ENCODE measurements at regions of chr12 and their contacts with region 1.

Region 1: GRCh38 chr12:9813821-9814809 is 13.2 kb upstream of the KLRF1 start:
- DNase-seq: peak; percentile 96
- ATAC-seq: peak; percentile 97
- H3K4me3 Mint-ChIP-seq: peak overlapping the region; percentile 81
- H3K27ac Mint-ChIP-seq: peak overlapping the region; percentile 67
- H3K4me1 Mint-ChIP-seq: peaks cover 12% of the 10 kb centered on the region
- H3K27me3 Mint-ChIP-seq: peaks cover 8% of the 10 kb centered on the region

Region 2: GRCh38 chr12:9391815-9392214 is 422.3 kb before region 1 on chr12:
- CTCF ChIA-PET with region 1: no interaction called
- POLR2A ChIA-PET with region 1: no interaction called
- intact Hi-C with region 1: no loop called
- DNase-seq: no peak
- ATAC-seq: no peak
- H3K4me3 Mint-ChIP-seq: no peak overlapping the region
- H3K27ac Mint-ChIP-seq: no peak overlapping the region
- H3K4me1 Mint-ChIP-seq: peaks cover 14% of the 10 kb centered on the region
- H3K27me3 Mint-ChIP-seq: no peaks in the 10 kb centered on the region

Region 3: DNA sequence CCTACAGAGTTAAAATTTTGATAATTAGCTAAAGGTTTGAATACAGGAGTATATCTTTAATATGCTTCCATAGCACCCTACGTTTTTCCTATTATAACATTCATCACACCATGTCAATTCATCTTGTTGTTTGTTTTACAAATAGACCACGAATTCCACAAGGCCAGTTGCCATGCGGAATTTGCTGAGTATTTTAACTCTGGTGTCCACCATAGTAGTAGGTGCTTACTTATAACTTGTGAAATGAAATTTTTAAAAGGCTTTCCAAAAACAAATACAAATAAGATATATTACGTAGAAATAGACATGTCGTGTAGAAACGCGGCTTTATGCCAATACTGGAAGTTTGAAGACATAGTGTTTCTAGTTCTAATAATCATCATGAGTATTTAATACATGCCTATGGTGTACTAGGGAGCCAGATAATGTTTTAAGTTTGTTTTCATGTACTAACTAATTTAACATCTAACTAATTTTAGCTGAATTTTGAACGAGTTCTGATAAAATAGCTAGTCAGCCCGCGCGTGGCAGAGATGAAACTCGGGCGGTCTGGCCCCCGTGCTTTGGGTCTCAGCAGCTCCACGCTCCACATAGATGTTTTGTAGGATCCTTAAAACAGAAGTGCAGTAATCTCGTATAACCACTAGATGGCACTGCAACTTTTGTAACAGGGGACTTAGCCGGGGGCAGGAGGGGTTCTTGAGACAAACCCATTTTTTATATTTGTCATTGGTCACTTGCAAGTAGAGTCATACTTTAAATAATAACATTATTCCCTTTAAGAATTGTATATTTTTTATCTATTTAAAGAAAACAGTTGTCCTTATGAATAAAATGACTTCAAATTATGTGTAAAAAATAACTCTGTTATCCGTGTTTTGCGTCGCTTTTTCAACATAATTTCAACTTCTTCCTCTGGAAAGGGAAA is 63.6 kb before region 1 on chr12:
- CTCF ChIA-PET with region 1: interaction called, 291 read pairs
- POLR2A ChIA-PET with region 1: interaction called, 12 read pairs
- intact Hi-C with region 1: loop called in 1 of 2 experiments (anchors 1 kb)
- DNase-seq: peak; percentile 72
- ATAC-seq: peak; percentile 62
- H3K4me3 Mint-ChIP-seq: peak overlapping the region; percentile 53
- H3K27ac Mint-ChIP-seq: peak overlapping the region; percentile 51
- H3K4me1 Mint-ChIP-seq: peaks cover 46% of the 10 kb centered on the region
- H3K27me3 Mint-ChIP-seq: no peaks in the 10 kb centered on the region

Region 4: DNA sequence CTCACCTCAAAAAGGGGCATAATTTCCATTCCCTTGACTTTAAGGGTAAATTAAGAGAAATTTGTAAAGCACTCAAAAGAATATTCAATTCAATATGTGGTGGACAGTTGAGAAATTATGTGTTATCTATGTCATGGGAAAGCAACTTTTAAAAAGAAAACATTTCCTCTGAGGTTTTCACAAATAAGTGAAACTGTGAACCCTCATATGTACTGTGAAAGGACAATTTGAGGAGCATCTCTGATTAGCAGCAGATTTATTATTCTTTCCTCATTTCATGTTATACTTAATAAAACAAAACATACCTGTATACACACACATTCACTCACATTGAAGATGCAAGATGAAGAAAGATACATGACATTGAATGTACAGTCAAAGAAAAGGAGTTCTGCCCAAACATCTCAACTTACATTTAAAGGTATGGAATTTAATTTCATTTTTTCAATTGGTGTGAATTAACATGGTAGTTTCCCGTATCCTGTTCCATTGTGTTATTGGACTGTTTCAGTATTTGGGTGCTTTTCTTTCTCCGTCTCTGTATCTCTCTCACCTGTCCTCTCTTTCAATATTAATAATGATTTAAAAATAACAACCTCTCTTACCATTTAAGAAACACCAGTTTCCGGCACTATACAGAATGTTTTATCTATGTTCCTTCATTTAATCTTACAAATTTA is 13.2 kb after region 1 on chr12 and contains the start of gene KLRF1:
- CTCF ChIA-PET with region 1: interaction called, 13 read pairs
- POLR2A ChIA-PET with region 1: no interaction called
- intact Hi-C with region 1: no loop called
- DNase-seq: no peak
- ATAC-seq: no peak
- H3K4me3 Mint-ChIP-seq: no peak within 1 kb of the TSS
- H3K27ac Mint-ChIP-seq: no peak within 1 kb of the TSS
- H3K4me1 Mint-ChIP-seq: no peaks in the 10 kb centered on the region
- H3K27me3 Mint-ChIP-seq: peaks cover 3% of the 10 kb centered on the region
- total RNA-seq, gene KLRF1: not detected

Region 5: GRCh38 chr12:9906873-9907272 is 92.8 kb after region 1 on chr12:
- CTCF ChIA-PET with region 1: interaction called, 10 read pairs
- POLR2A ChIA-PET with region 1: no interaction called
- intact Hi-C with region 1: no loop called
- DNase-seq: peak; percentile 30
- ATAC-seq: peak; percentile 98
- H3K4me3 Mint-ChIP-seq: no peak overlapping the region
- H3K27ac Mint-ChIP-seq: peak overlapping the region; percentile 61
- H3K4me1 Mint-ChIP-seq: peaks cover 27% of the 10 kb centered on the region
- H3K27me3 Mint-ChIP-seq: no peaks in the 10 kb centered on the region

Region 6: GRCh38 chr12:9940375-9940774 is 126.3 kb after region 1 on chr12:
- CTCF ChIA-PET with region 1: interaction called, 15 read pairs
- POLR2A ChIA-PET with region 1: no interaction called
- intact Hi-C with region 1: loop called in 1 of 2 experiments (anchors 5 kb)
- DNase-seq: no peak
- ATAC-seq: no peak
- H3K4me3 Mint-ChIP-seq: no peak overlapping the region
- H3K27ac Mint-ChIP-seq: no peak overlapping the region
- H3K4me1 Mint-ChIP-seq: peaks cover 14% of the 10 kb centered on the region
- H3K27me3 Mint-ChIP-seq: peaks cover 3% of the 10 kb centered on the region

Region 7: GRCh38 chr12:10140001-10140400 is 325.9 kb after region 1 on chr12:
- CTCF ChIA-PET with region 1: interaction called, 20 read pairs
- POLR2A ChIA-PET with region 1: no interaction called
- intact Hi-C with region 1: loop called (anchors 1 kb)
- DNase-seq: peak; percentile 66
- ATAC-seq: no peak
- H3K4me3 Mint-ChIP-seq: no peak overlapping the region
- H3K27ac Mint-ChIP-seq: no peak overlapping the region
- H3K4me1 Mint-ChIP-seq: peaks cover 2% of the 10 kb centered on the region
- H3K27me3 Mint-ChIP-seq: peaks cover 2% of the 10 kb centered on the region

Measured in activated CD4-positive, alpha-beta T cell treated with anti-CD3 and anti-CD28 coated beads for 36 hours (primary cell).